K562 (cell line): ENCODE measurements at regions of chr19 and their contacts with region 1.

Region 1: DNA sequence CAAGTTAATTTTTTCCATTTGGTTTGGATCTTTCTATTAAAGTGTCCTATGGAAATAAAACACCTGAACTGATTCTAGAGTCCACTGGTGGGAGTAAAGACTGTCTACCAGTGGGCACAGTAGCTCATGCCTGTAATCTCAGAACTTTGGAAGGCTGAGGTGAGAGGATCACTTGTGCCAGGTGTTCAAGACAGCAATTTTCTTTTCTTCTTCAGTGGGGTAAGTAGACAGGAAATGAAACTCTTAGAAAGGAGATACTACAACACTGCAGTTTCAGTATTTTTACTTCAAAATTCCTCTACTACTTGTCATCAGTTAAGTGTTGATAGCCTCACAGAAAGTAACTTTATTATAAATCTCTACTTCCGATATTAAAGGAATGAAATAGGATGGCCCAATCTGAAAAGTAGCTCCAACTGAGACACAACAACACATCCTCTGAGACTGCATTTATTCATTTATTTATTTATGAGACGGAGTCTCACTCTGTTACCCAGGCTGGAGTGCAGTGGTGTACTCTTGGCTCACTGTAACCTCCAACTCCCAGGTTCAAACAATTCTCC is 26.3 kb downstream of the DNMT1 start:
- DNase-seq: no peak
- ATAC-seq: no peak
- H3K4me3 ChIP-seq: no peak overlapping the region
- H3K27ac ChIP-seq: no peak overlapping the region
- H3K4me1 ChIP-seq: no peaks in the 10 kb centered on the region
- H3K27me3 ChIP-seq: no peaks in the 10 kb centered on the region
- CTCF ChIP-seq: no peak
- EP300 ChIP-seq: no peak
- POLR2A ChIP-seq: no peak
- RAD21 ChIP-seq: no peak

Region 2: GRCh38 chr19:10184636-10185035 is 16.2 kb after region 1 on chr19:
- CTCF ChIA-PET with region 1: no interaction called
- POLR2A ChIA-PET with region 1: interaction called, 14 read pairs
- in situ Hi-C with region 1: no loop called
- intact Hi-C with region 1: no loop called
- DNase-seq: no peak
- ATAC-seq: no peak; the same call in 2 of the 3 replicates
- H3K4me3 ChIP-seq: no peak overlapping the region
- H3K27ac ChIP-seq: no peak overlapping the region
- H3K4me1 ChIP-seq: peaks cover 3 to 7% of the 10 kb centered on the region in 2 experiments; a peak in 3 of 5 replicates
- H3K27me3 ChIP-seq: no peaks in the 10 kb centered on the region
- CTCF ChIP-seq: no peak
- EP300 ChIP-seq: no peak
- POLR2A ChIP-seq: no peak
- RAD21 ChIP-seq: no peak